ENCODE measurements at regions of chr19 and their contacts with region 1.

Region 1: DNA sequence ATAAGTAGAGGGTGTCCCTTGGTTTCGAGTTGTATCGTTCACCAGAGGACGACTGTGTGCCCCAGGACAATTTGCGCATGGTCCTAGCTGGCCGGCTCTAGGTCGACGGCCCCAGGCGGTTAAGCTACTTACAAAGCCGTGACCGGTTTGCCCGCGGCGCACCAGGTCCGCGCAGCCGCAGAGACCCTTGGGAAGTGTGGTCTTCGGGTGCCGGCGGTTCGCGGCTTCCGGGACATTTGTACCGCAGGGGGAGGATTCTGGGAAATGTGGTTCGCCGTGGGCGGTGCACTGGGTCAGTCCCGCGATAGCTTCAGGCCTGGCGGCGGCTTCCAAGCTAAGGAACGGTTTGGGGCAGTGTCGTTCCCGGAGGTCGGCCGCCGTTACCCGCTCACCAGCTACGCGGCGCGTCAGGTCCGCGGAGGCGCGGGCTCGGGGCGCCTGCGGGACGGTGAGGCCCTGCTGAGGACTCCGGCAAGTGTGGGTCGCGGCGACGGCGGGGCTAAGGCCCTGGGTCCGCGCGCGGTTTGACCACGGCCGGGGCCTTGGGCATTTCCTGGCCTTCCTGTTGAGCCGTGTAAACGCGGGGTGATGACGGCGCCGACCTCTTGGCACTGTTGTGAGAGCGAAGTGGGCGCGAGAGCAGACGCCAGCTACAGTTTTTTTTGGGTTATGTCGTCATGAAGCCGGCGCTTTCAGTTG is at the start of gene ZNF302:
- DNase-seq: peak; percentile 93 to 95 (median 94)
- H3K4me3 ChIP-seq: peak within 1 kb of the TSS; percentile 73 to 94
- H3K4me3 Mint-ChIP-seq: peak within 1 kb of the TSS; percentile 95 to 100 (median 99)
- H3K27ac ChIP-seq: peak within 1 kb of the TSS; percentile 89
- H3K27ac Mint-ChIP-seq: peak within 1 kb of the TSS; percentile 97 to 100 (median 99)
- H3K4me1 ChIP-seq: peaks cover 21% of the 10 kb centered on the region
- H3K4me1 Mint-ChIP-seq: peaks cover 18 to 41% (median 23%) of the 10 kb centered on the region in 4 donors
- H3K27me3 ChIP-seq: no peaks in the 10 kb centered on the region
- H3K27me3 Mint-ChIP-seq: peaks cover 0 to 6% of the 10 kb centered on the region in 2 donors
- total RNA-seq, gene ZNF302: 50.8 to 53.3 TPM

Region 2: DNA sequence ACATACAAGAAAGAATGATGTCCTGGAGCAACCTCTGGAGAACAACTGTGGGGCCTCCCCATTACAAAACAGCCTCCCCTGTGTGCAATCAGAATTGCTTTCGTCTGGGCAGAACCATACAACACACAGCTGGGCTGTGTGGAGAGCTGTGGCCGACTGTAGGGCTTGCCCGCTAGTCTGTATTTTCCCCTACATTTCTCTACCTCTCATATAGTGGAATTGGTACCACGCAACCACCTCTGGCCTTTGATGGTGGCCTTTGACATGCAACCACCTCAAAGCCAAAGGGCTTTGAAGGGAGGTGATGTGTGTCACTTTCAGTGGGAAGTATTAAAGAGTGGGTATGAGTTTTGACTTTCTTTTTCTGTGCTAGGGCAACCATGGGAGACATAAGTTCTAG is 389.2 kb before region 1 on chr19:
- CTCF ChIA-PET with region 1: no interaction called
- POLR2A ChIA-PET with region 1: no interaction called
- intact Hi-C with region 1: no loop called
- DNase-seq: no peak
- H3K4me3 ChIP-seq: no peak overlapping the region
- H3K4me3 Mint-ChIP-seq: no peak overlapping the region
- H3K27ac ChIP-seq: no peak overlapping the region
- H3K27ac Mint-ChIP-seq: peak overlapping the region in 2 of 7 donors; percentile 19 to 42
- H3K4me1 ChIP-seq: peaks cover 9% of the 10 kb centered on the region
- H3K4me1 Mint-ChIP-seq: peaks cover 8 to 25% (median 14%) of the 10 kb centered on the region in 4 donors
- H3K27me3 ChIP-seq: no peaks in the 10 kb centered on the region
- H3K27me3 Mint-ChIP-seq: no peaks in the 10 kb centered on the region

Region 3: GRCh38 chr19:34772697-34773554 is 95.4 kb after region 1 on chr19 and contains the start of gene ZNF599:
- CTCF ChIA-PET with region 1: no interaction called
- POLR2A ChIA-PET with region 1: interaction called, 10 read pairs
- intact Hi-C with region 1: loop called (anchors 1 kb)
- DNase-seq: peak; percentile 87 to 89 (median 88)
- H3K4me3 ChIP-seq: peak within 1 kb of the TSS; percentile 55 to 93
- H3K4me3 Mint-ChIP-seq: peak within 1 kb of the TSS; percentile 93 to 98 (median 97)
- H3K27ac ChIP-seq: peak within 1 kb of the TSS; percentile 68
- H3K27ac Mint-ChIP-seq: peak within 1 kb of the TSS; percentile 86 to 98 (median 97)
- H3K4me1 ChIP-seq: peaks cover 9% of the 10 kb centered on the region
- H3K4me1 Mint-ChIP-seq: peaks cover 13 to 23% (median 19%) of the 10 kb centered on the region in 4 donors
- H3K27me3 ChIP-seq: no peaks in the 10 kb centered on the region
- H3K27me3 Mint-ChIP-seq: peaks cover 0 to 4% of the 10 kb centered on the region in 2 donors
- total RNA-seq, gene ZNF599: 10.6 to 10.7 TPM